ENCODE measurements at regions of chr7 and their contacts with region 1.

Region 1: GRCh38 chr7:87886875-87887274 is 10.6 kb downstream of the DBF4 start:
- DNase-seq: peak in 1 of 2 donors; percentile 64
- ATAC-seq: peak in 1 of 3 donors; percentile 38
- H3K4me3 ChIP-seq: no peak overlapping the region
- H3K4me3 Mint-ChIP-seq: no peak overlapping the region
- H3K27ac ChIP-seq: no peak overlapping the region
- H3K27ac Mint-ChIP-seq: no peak overlapping the region
- H3K4me1 ChIP-seq: no peaks in the 10 kb centered on the region
- H3K4me1 Mint-ChIP-seq: peaks cover 0 to 5% of the 10 kb centered on the region in 2 donors
- H3K27me3 ChIP-seq: no peaks in the 10 kb centered on the region
- H3K27me3 Mint-ChIP-seq: no peaks in the 10 kb centered on the region
- CTCF ChIP-seq: peak; percentile 70

Region 2: DNA sequence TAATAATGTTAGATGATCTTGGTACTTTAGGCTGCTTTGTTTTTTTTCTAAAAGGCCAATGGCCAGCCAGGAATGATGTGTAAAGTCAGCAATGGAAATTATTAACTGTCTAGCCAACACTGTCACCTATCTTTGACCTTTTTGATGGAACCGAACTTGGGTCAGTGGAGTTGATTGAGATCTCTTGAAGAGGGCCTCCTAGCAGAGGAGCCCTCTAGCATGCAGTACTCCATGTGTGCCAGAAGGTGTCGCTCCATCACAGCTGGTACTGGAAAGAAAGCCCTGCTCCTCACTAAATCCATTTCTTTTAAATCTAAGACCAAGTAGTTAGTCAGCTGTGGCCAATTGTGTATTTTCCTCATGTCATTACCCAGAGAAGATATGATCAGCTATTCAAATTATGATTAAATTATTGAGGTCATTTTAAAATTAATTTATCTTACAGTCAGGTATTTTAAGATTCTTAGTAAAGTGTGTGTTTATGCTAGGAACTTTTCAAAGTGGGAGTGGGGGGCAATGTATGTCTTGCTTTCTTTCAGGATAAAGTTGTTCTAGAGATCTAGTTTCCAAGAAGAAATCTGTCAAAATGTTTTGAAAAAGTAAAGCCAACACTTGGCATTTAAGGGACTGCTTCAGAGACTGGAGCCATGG is 574.5 kb before region 1 on chr7:
- intact Hi-C with region 1: loop called (anchors 1 kb)
- DNase-seq: peak; percentile 48 to 85
- ATAC-seq: peak; percentile 90 to 100 (median 99)
- H3K4me3 ChIP-seq: no peak overlapping the region
- H3K4me3 Mint-ChIP-seq: no peak overlapping the region
- H3K27ac ChIP-seq: no peak overlapping the region
- H3K27ac Mint-ChIP-seq: no peak overlapping the region
- H3K4me1 ChIP-seq: no peaks in the 10 kb centered on the region
- H3K4me1 Mint-ChIP-seq: no peaks in the 10 kb centered on the region
- H3K27me3 ChIP-seq: no peaks in the 10 kb centered on the region
- H3K27me3 Mint-ChIP-seq: peaks cover 2 to 8% of the 10 kb centered on the region in 2 donors
- CTCF ChIP-seq: peak; percentile 99

Region 3: DNA sequence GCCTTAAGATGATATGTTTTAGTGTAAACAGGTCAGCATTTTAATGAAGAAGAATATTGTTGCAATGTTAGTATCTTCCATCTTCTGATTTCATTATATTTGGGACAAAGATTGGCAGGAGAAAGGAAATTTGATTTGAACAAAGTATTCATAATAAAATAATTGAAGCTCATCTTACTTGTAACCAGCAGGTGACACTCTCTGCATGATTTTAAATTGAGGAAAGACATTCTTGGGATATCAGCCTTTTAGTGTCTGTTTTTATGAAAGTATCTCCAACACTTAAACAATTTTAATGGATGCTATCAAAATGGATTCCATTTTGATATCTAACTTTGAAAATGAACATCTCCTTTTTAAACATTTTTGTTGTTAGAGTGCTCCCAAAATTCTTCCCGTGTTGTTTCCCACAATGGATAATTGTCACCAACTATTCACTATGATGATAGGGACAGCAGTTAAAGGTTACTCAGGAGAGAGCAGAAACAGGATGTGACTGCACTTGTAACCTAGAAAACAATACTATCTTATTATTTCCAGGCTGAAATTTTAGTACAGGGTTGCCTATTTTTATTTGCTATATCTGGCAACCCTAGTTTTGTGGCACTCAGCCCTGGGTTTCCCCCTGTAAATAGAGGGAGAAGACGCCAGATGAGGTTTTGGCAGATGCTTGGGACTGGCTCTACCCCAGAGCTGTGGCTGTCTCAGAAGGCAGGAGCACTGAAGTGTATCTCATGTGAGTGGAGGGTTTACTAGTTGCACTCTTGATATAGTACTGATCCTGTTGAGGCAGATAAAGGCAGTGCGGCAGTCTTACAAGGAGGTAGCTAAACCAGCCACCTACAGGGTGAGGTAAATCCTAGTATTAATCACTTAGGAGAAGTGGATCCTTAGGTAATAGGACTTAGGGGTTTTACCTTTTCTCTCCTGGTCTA is 380.4 kb before region 1 on chr7:
- intact Hi-C with region 1: loop called (anchors 2 kb)
- DNase-seq: peak in 1 of 2 donors; percentile 31
- ATAC-seq: no peak
- H3K4me3 ChIP-seq: no peak overlapping the region
- H3K4me3 Mint-ChIP-seq: no peak overlapping the region
- H3K27ac ChIP-seq: no peak overlapping the region
- H3K27ac Mint-ChIP-seq: peak overlapping the region; percentile 57 to 61
- H3K4me1 ChIP-seq: no peaks in the 10 kb centered on the region
- H3K4me1 Mint-ChIP-seq: peaks cover 19 to 24% of the 10 kb centered on the region in 2 donors
- H3K27me3 ChIP-seq: no peaks in the 10 kb centered on the region
- H3K27me3 Mint-ChIP-seq: no peaks in the 10 kb centered on the region
- CTCF ChIP-seq: peak; percentile 20

Region 4: DNA sequence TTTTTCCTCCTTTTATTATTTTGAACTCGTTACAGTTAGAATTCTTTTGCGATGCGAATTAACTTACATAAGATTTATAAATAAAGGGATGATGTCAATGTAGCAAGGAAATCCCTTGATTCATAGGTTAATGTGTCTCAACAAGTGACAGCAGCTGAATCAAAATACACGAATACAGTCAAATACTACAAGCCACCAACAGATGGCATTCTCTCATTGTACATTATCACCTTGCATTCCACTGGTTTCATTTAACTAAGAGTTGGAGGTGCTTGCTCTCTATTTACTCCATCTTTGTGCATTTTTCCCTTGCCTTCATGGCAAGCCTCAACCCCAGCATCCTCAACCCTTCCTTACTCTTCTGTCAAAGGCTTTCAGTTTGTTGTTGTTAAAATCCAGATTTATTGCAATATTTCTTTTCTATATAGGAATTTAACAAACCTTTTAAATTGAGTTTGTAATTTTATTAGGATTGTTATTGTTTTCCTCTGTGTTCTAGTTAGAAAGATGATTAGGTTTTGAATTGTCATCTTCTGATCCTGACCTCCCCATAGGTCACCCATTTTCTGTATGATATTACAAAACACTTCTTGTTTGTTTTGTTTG is 89.0 kb before region 1 on chr7:
- intact Hi-C with region 1: loop called (anchors 1 kb)
- DNase-seq: peak in 1 of 2 donors; percentile 71
- ATAC-seq: peak; percentile 60 to 73 (median 66)
- H3K4me3 ChIP-seq: no peak overlapping the region
- H3K4me3 Mint-ChIP-seq: no peak overlapping the region
- H3K27ac ChIP-seq: no peak overlapping the region
- H3K27ac Mint-ChIP-seq: no peak overlapping the region
- H3K4me1 ChIP-seq: no peaks in the 10 kb centered on the region
- H3K4me1 Mint-ChIP-seq: no peaks in the 10 kb centered on the region
- H3K27me3 ChIP-seq: no peaks in the 10 kb centered on the region
- H3K27me3 Mint-ChIP-seq: peaks cover 0 to 27% of the 10 kb centered on the region in 2 donors
- CTCF ChIP-seq: peak; percentile 62

Region 5: DNA sequence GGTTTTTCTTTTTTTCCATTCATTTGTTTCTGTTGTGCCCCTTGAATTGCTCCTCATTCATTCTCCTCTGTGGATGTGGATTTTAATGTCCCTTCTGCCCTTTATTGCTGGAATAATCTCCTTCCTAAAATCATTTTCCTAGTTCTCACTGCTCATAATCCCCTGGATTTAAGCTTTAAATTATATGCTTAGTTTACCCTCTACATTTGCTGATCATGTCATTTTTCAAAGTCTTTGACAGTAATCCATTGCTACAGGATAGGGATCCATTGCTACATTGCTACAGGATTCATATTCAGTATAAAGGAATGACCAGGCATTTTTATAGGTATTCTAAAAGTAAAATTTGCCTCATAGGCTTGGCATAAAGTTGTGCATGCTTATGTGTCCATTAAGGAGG is 61.5 kb after region 1 on chr7:
- intact Hi-C with region 1: no loop called
- DNase-seq: no peak
- ATAC-seq: no peak
- H3K4me3 ChIP-seq: no peak overlapping the region
- H3K4me3 Mint-ChIP-seq: no peak overlapping the region
- H3K27ac ChIP-seq: no peak overlapping the region
- H3K27ac Mint-ChIP-seq: no peak overlapping the region
- H3K4me1 ChIP-seq: no peaks in the 10 kb centered on the region
- H3K4me1 Mint-ChIP-seq: peaks cover 0 to 4% of the 10 kb centered on the region in 2 donors
- H3K27me3 ChIP-seq: no peaks in the 10 kb centered on the region
- H3K27me3 Mint-ChIP-seq: no peaks in the 10 kb centered on the region
- CTCF ChIP-seq: no peak